ENCODE measurements at regions of chr22 and their contacts with region 1.

Region 1: DNA sequence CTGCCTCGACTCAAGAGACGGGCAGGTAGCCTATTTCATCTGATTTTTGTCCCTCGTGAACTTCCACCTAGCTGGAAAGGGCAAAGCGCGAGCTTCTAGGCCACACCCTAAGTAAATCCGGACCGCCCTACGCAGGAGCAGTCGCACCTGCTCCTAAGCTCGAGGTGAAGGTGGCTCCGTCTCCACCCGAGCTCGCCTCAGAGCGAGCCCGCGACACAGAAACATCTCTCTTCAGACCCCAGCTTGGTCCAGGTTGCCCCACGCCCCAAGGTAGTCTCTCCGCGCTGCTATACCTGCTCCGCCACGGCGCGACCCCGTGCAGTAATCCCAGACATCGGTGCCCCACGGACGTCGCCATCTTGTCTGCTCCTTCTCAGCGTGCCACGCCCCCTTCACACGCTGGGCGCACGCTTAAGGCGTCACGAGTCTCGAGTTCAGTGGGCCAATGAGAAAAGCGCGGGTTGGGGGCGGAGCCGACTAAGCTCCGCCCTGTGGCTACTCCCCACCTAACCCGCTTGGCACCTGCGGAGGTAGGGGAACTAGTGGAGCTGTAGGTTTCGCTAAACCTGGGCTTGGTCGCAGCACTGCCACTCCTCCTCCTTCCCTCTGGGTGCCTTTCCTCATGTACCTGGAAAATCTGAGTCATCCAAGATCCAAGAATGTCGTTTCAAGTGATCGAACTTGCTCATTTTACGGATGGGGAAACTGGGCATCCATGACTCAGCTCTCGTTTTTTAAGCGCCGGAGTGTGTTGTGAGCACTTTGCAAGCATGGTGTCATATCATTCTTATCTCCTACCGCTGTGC is at the start of gene PISD:
- DNase-seq: peak; percentile 98
- ATAC-seq: peak; percentile 92
- H3K4me3 Mint-ChIP-seq: peak within 1 kb of the TSS; percentile 82
- H3K27ac Mint-ChIP-seq: peak within 1 kb of the TSS; percentile 88
- H3K4me1 Mint-ChIP-seq: peaks cover 27% of the 10 kb centered on the region
- H3K27me3 Mint-ChIP-seq: no peaks in the 10 kb centered on the region
- CTCF ChIP-seq: no peak
- total RNA-seq, gene PISD: 33.9 to 35.9 TPM

Region 2: GRCh38 chr22:31676700-31677099 is 14.6 kb after region 1 on chr22:
- CTCF ChIA-PET with region 1: interaction called, 27 read pairs
- POLR2A ChIA-PET with region 1: interaction called, 20 read pairs
- intact Hi-C with region 1: no loop called
- DNase-seq: peak; percentile 95
- ATAC-seq: peak; percentile 100
- H3K4me3 Mint-ChIP-seq: peak overlapping the region; percentile 83
- H3K27ac Mint-ChIP-seq: peak overlapping the region; percentile 89
- H3K4me1 Mint-ChIP-seq: peaks cover 19% of the 10 kb centered on the region
- H3K27me3 Mint-ChIP-seq: no peaks in the 10 kb centered on the region
- CTCF ChIP-seq: no peak

Region 3: GRCh38 chr22:31749636-31750364 is 87.7 kb after region 1 on chr22 and contains the start of gene PRR14L:
- CTCF ChIA-PET with region 1: interaction called, 5 read pairs
- POLR2A ChIA-PET with region 1: interaction called, 8 read pairs
- intact Hi-C with region 1: loop called (anchors 5 kb)
- DNase-seq: peak; percentile 100
- ATAC-seq: peak; percentile 77
- H3K4me3 Mint-ChIP-seq: peak within 1 kb of the TSS; percentile 89
- H3K27ac Mint-ChIP-seq: peak within 1 kb of the TSS; percentile 90
- H3K4me1 Mint-ChIP-seq: peaks cover 48% of the 10 kb centered on the region
- H3K27me3 Mint-ChIP-seq: no peaks in the 10 kb centered on the region
- CTCF ChIP-seq: no peak
- total RNA-seq, gene PRR14L: 40.2 to 45.1 TPM

Region 4: DNA sequence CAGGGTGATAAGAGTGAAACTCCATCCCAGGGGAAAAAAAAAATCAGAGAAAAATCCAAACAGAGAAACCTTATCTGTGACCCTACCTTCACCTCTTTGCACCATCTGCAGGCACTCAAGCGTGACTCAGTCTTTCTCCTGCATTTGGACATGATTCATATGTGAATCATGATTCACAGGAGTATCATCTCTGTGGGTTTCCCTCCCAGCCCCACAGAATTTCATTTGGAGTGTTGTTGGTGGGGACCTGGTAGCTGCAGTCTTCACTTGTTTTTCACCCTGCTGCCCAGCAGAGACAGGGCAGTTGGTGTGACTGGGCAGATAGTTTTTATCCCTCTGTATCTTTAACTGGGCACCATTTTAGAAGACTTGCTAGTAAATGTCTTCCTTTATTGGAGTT is 167.5 kb after region 1 on chr22:
- CTCF ChIA-PET with region 1: interaction called, 4 read pairs
- POLR2A ChIA-PET with region 1: no interaction called
- intact Hi-C with region 1: loop called (anchors 10 kb)
- DNase-seq: peak; percentile 72
- ATAC-seq: peak; percentile 93
- H3K4me3 Mint-ChIP-seq: no peak overlapping the region
- H3K27ac Mint-ChIP-seq: peak overlapping the region; percentile 88
- H3K4me1 Mint-ChIP-seq: peaks cover 30% of the 10 kb centered on the region
- H3K27me3 Mint-ChIP-seq: no peaks in the 10 kb centered on the region
- CTCF ChIP-seq: no peak

Region 5: GRCh38 chr22:31952459-31952858 is 290.4 kb after region 1 on chr22:
- CTCF ChIA-PET with region 1: interaction called, 9 read pairs
- POLR2A ChIA-PET with region 1: no interaction called
- intact Hi-C with region 1: loop called (anchors 5 kb)
- DNase-seq: no peak
- ATAC-seq: no peak
- H3K4me3 Mint-ChIP-seq: no peak overlapping the region
- H3K27ac Mint-ChIP-seq: peak overlapping the region; percentile 53
- H3K4me1 Mint-ChIP-seq: peaks cover 73% of the 10 kb centered on the region
- H3K27me3 Mint-ChIP-seq: no peaks in the 10 kb centered on the region
- CTCF ChIP-seq: no peak

Region 6: DNA sequence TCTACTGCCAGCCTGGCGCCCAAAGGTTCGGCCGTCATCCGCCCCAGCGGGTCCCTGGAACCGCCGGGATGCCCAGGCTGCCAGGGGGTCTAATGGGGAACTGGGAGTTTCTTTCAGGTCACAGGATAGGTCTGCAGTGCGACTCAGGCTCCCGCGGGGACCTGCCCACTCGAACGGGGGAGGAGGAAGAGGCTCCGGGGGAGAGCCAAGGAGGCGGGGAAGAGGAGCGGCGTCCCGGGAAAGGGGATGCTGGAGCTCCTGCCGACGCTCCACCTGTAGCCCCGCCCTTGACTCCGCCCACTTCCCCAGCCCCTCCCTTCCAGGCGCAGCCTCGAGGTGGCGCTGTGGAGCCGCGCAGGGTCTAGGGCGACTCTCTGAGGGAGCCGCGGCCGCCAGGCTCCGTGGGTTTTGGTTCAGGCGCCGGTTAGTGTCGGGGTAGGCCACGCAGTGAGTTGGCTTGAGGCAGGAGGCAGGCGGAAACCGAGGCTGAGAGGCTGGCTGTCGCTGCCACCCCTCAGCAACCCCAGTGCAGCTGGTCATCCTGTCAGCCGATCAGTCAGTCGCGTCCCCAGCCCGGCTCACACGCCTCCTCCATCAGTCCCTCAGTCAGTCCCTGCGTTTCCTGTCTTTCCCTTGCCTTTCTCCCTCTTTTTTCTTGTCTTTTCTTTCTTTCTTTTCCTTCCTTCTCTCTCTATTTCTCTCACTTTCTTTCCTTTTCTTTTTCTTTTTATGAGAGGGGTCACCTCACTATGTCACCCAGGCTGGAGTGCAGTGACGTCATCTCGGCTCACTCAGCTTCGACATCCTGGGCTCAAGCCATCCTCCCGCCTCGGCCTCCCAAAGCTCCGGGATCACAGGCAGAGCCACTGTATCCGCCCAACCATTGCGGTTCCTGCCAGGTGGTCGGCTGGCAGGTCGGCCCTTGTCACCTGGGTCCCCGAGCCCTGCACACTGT is 308.7 kb after region 1 on chr22:
- CTCF ChIA-PET with region 1: interaction called, 18 read pairs
- POLR2A ChIA-PET with region 1: no interaction called
- intact Hi-C with region 1: no loop called
- DNase-seq: peak; percentile 86
- ATAC-seq: peak; percentile 99
- H3K4me3 Mint-ChIP-seq: peak overlapping the region; percentile 66
- H3K27ac Mint-ChIP-seq: no peak overlapping the region
- H3K4me1 Mint-ChIP-seq: peaks cover 12% of the 10 kb centered on the region
- H3K27me3 Mint-ChIP-seq: no peaks in the 10 kb centered on the region
- CTCF ChIP-seq: peak; percentile 92